ENCODE measurements at regions of chr16 and their contacts with region 1.

Region 1: GRCh38 chr16:3503523-3503922 is 2.7 kb downstream of the CLUAP1 start:
- DNase-seq: peak in 8 of 9 donors; percentile 50 to 81 (median 70)
- ATAC-seq: peak; percentile 49
- H3K4me3 ChIP-seq: peak overlapping the region; percentile 3
- H3K4me3 Mint-ChIP-seq: peak overlapping the region; percentile 76 to 94 (median 84)
- H3K27ac ChIP-seq: peak overlapping the region; percentile 92
- H3K27ac Mint-ChIP-seq: peak overlapping the region; percentile 90 to 98 (median 95)
- H3K4me1 ChIP-seq: peaks cover 40 to 47% of the 10 kb centered on the region in 2 donors
- H3K4me1 Mint-ChIP-seq: peaks cover 37 to 80% (median 67%) of the 10 kb centered on the region in 7 donors
- H3K27me3 ChIP-seq: no peaks in the 10 kb centered on the region
- H3K27me3 Mint-ChIP-seq: no peaks in the 10 kb centered on the region

Region 2: GRCh38 chr16:3182608-3183444 is 320.7 kb before region 1 on chr16:
- CTCF ChIA-PET with region 1: interaction called, 5 read pairs
- POLR2A ChIA-PET with region 1: no interaction called
- intact Hi-C with region 1: loop called in 1 of 2 experiments (anchors 1 kb)
- DNase-seq: peak in 5 of 9 donors; percentile 32 to 71 (median 43)
- ATAC-seq: peak; percentile 41
- H3K4me3 ChIP-seq: peak overlapping the region; percentile 58
- H3K4me3 Mint-ChIP-seq: peak overlapping the region; percentile 72 to 86 (median 79)
- H3K27ac ChIP-seq: no peak overlapping the region
- H3K27ac Mint-ChIP-seq: peak overlapping the region in 7 of 9 donors; percentile 22 to 86 (median 49)
- H3K4me1 ChIP-seq: peaks cover 8 to 16% of the 10 kb centered on the region in 2 donors
- H3K4me1 Mint-ChIP-seq: peaks cover 24 to 38% (median 27%) of the 10 kb centered on the region in 7 donors
- H3K27me3 ChIP-seq: peaks cover 4 to 26% of the 10 kb centered on the region in 2 donors
- H3K27me3 Mint-ChIP-seq: peaks cover 77 to 88% (median 81%) of the 10 kb centered on the region in 5 donors

Region 3: GRCh38 chr16:3234543-3235541 is 268.7 kb before region 1 on chr16 and contains the start of gene ZNF200:
- CTCF ChIA-PET with region 1: no interaction called
- POLR2A ChIA-PET with region 1: no interaction called
- intact Hi-C with region 1: loop called in 1 of 2 experiments (anchors 1 kb)
- DNase-seq: peak; percentile 85 to 96 (median 94)
- ATAC-seq: peak; percentile 94
- H3K4me3 ChIP-seq: peak within 1 kb of the TSS; percentile 98
- H3K4me3 Mint-ChIP-seq: peak within 1 kb of the TSS; percentile 88 to 97 (median 94)
- H3K27ac ChIP-seq: peak within 1 kb of the TSS; percentile 90
- H3K27ac Mint-ChIP-seq: peak within 1 kb of the TSS; percentile 93 to 98 (median 97)
- H3K4me1 ChIP-seq: peaks cover 18 to 23% of the 10 kb centered on the region in 2 donors
- H3K4me1 Mint-ChIP-seq: peaks cover 20 to 48% (median 39%) of the 10 kb centered on the region in 7 donors
- H3K27me3 ChIP-seq: no peaks in the 10 kb centered on the region
- H3K27me3 Mint-ChIP-seq: peaks cover 0 to 3% (median 0%) of the 10 kb centered on the region in 5 donors
- total RNA-seq, gene ZNF200: 4.8 to 33.3 (median 16.6) TPM

Region 4: GRCh38 chr16:3654249-3654991 is 150.9 kb after region 1 on chr16 and contains the start of gene DNASE1:
- CTCF ChIA-PET with region 1: no interaction called
- POLR2A ChIA-PET with region 1: no interaction called
- intact Hi-C with region 1: no loop called
- DNase-seq: peak in 8 of 9 donors; percentile 32 to 57 (median 46)
- ATAC-seq: peak; percentile 72
- H3K4me3 ChIP-seq: no peak within 1 kb of the TSS
- H3K4me3 Mint-ChIP-seq: no peak within 1 kb of the TSS
- H3K27ac ChIP-seq: no peak within 1 kb of the TSS
- H3K27ac Mint-ChIP-seq: peak within 1 kb of the TSS in 5 of 9 donors; percentile 55 to 88 (median 76)
- H3K4me1 ChIP-seq: no peaks in the 10 kb centered on the region
- H3K4me1 Mint-ChIP-seq: peaks cover 0 to 11% (median 4%) of the 10 kb centered on the region in 7 donors
- H3K27me3 ChIP-seq: no peaks in the 10 kb centered on the region
- H3K27me3 Mint-ChIP-seq: no peaks in the 10 kb centered on the region
- total RNA-seq, gene DNASE1: 26.0 to 59.6 (median 37.2) TPM